ENCODE measurements at regions of chr15 and their contacts with region 1.

Region 1: DNA sequence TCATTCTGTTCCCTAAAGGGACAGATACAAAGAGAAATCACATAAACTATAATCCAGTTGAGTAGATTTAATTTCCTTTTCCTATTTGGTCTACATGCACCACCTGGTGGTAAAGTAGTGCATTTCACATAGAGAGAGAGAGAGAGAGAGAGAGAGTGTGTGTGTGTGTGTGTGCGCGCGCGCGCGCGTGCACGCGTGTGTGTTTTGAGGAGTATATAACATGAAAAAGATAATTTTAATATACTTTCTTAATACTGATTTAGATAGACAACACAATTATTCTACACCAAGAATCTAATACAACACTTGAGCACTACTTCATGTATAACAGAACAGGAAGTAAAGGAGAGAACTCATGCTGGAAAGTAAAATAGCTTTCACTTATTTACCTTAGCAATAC is 1.1 kb upstream of the FGF7 start:
- DNase-seq: peak in 30 of 42 donors; percentile 3 to 60 (median 24)

Region 2: DNA sequence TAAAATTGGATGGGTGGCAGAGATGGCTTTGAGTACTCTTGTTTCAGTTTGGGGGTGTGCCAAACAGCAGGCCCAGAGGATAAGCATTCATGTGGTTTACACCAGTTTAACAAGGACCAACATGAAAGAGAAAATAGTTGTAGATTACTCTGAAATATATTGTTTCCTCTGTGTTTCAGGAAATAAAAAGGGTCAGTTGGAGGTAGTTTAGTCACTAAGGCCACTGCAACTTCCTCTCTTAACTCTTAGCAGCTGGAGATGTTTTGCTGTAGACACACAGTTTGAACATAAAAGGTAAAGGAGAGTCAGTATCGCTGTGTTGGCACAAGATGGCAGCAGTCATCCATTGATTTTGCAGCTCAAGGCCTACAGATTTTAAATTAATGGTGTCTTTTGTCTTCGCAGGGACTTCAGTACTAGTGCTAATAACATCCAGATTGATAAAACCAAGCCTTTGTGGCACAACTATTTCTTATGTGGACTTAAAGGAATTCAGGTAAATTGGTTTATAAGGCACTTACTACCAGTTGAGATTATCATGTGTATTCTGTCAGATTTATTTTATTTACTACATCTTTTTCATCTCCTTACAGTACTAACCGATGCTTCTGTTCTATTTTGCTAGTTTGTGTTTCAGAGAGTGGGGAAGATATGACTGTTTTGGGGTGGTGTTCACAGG is 186.4 kb before region 1 on chr15:
- intact Hi-C with region 1: loop called (anchors 10 kb)
- DNase-seq: peak in 41 of 42 donors; percentile 12 to 87 (median 67)

Region 3: DNA sequence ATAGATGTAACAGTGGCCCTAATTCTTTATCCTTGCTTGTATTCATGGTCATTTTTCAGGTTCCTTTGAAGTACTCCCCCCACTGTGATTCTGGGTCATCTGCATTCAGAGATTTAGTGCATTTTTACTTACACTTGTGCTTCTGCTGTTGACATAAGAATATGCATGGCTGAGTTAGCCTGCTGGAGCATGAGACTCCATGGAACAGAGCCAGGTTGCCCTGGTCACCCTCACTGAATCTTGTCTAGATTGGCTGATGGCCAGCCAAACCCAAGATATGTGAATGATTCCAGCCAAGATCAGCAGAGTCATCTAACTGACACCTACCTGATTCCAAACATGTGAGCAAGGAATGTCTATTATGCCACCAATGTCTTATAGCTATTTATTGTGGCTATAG is 223.9 kb after region 1 on chr15:
- intact Hi-C with region 1: no loop called
- DNase-seq: peak in 1 of 42 donors; percentile 18